OCI-LY7 (cell line): ENCODE measurements at regions of chr19 and their contacts with region 1.

Region 1: DNA sequence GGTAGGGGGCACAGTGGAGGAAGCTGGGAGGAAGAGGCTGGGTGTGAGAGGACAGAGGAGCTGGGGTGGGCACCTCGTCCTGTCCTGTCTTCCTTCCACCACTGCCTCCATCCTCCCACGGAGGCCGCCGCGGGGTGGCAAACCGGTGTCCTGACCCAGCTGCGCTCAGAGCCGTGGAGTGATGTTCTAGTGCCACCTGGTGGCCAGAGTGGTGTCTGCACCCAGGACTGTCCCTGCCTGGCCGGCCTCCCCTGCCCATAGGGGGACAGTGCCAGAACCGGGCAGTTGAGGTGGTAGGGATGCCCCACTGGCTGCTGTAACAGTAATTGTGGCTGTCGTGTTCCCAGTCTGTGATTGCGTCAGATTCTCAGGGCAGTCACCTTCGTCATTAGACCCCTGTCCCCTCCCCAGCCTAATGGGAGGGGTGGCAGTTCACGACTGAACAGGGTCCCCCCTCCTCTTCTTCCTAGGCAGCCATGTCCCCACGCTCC is 11.1 kb upstream of the ARRDC2 start:
- DNase-seq: peak; percentile 84
- H3K4me3 ChIP-seq: peak overlapping the region; percentile 68
- H3K27ac ChIP-seq: peak overlapping the region; percentile 72
- H3K4me1 ChIP-seq: peaks cover 31% of the 10 kb centered on the region
- CTCF ChIP-seq: peak; percentile 95

Region 2: GRCh38 chr19:17873786-17874757 is 122.8 kb before region 1 on chr19:
- CTCF ChIA-PET with region 1: interaction called, 4 read pairs
- POLR2A ChIA-PET with region 1: no interaction called
- intact Hi-C with region 1: loop called (anchors 5 kb)
- DNase-seq: peak; percentile 78
- H3K4me3 ChIP-seq: peak overlapping the region; percentile 65
- H3K27ac ChIP-seq: no peak overlapping the region
- H3K4me1 ChIP-seq: peaks cover 14% of the 10 kb centered on the region
- CTCF ChIP-seq: no peak

Region 3: GRCh38 chr19:17915951-17916593 is 80.8 kb before region 1 on chr19:
- CTCF ChIA-PET with region 1: no interaction called
- POLR2A ChIA-PET with region 1: no interaction called
- intact Hi-C with region 1: no loop called
- DNase-seq: no peak
- H3K4me3 ChIP-seq: no peak overlapping the region
- H3K27ac ChIP-seq: no peak overlapping the region
- H3K4me1 ChIP-seq: no peaks in the 10 kb centered on the region
- CTCF ChIP-seq: no peak

Region 4: GRCh38 chr19:17938092-17938845 is 58.6 kb before region 1 on chr19:
- CTCF ChIA-PET with region 1: interaction called, 32 read pairs
- POLR2A ChIA-PET with region 1: interaction called, 6 read pairs
- intact Hi-C with region 1: loop called (anchors 1 kb)
- DNase-seq: peak; percentile 78
- H3K4me3 ChIP-seq: no peak overlapping the region
- H3K27ac ChIP-seq: no peak overlapping the region
- H3K4me1 ChIP-seq: peaks cover 11% of the 10 kb centered on the region
- CTCF ChIP-seq: peak; percentile 92

Region 5: GRCh38 chr19:17947815-17948513 is 48.9 kb before region 1 on chr19:
- CTCF ChIA-PET with region 1: interaction called, 3 read pairs
- POLR2A ChIA-PET with region 1: no interaction called
- intact Hi-C with region 1: loop called (anchors 1 kb)
- DNase-seq: peak; percentile 98
- H3K4me3 ChIP-seq: peak overlapping the region; percentile 65
- H3K27ac ChIP-seq: peak overlapping the region; percentile 25
- H3K4me1 ChIP-seq: peaks cover 42% of the 10 kb centered on the region
- CTCF ChIP-seq: no peak

Region 6: DNA sequence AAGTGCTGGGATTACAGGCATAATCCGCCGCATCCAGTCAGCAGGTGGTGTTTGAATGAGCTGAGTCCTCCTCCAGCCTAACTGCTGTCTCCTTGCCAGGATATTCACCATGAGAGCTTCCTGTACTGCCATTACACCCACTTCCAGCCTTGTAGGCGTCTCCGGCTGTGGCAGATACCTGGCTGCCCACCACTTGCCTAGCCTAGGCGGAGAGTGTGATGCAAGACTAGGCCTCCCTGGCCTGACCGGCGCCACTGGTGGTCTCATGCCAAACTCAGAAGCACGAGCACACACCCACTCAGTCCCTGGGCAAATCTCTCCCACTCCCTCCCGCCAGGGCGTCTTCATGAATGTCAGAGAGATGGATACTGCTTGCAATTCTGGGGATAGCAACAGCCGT is 73.3 kb after region 1 on chr19:
- CTCF ChIA-PET with region 1: no interaction called
- POLR2A ChIA-PET with region 1: no interaction called
- intact Hi-C with region 1: no loop called
- DNase-seq: no peak
- H3K4me3 ChIP-seq: no peak overlapping the region
- H3K27ac ChIP-seq: no peak overlapping the region
- H3K4me1 ChIP-seq: no peaks in the 10 kb centered on the region
- CTCF ChIP-seq: no peak

Region 7: GRCh38 chr19:18131841-18132596 is 135.1 kb after region 1 on chr19:
- CTCF ChIA-PET with region 1: no interaction called
- POLR2A ChIA-PET with region 1: no interaction called
- intact Hi-C with region 1: no loop called
- DNase-seq: no peak
- H3K4me3 ChIP-seq: no peak overlapping the region
- H3K27ac ChIP-seq: no peak overlapping the region
- H3K4me1 ChIP-seq: no peaks in the 10 kb centered on the region
- CTCF ChIP-seq: no peak

Region 8: DNA sequence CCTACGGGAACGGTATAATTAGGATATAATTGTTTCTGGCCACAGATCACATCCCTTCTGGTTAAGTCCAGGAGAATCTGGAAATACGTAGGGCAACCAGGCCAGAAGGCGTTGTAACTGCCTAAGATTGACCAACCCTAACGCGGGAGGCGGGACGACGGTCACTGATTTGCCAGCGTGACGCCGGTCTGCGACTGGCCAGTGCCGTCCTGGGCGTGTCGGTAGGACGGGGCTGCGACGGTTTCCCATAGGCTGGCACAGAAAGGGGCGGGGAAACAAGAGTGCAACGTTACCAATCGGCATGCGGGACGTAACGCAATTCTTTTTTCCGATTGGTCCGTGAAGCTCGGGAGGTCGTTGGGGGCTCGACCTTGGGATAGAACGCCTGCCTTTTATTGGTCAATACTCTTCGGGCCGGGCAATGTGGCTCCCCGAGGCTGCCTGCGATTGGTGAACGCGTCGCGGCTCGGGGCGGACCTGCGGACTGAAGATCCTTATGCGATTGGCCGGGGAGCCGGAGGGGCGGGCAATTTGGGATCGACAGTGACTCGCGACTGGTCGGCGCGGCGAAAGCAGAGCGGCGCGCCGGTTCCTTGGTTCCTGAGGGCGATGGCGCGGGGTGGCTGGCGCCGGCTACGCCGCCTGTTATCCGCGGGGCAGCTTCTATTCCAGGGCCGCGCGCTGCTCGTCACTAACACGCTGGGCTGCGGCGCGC is 196.0 kb after region 1 on chr19 and contains the start of gene MPV17L2:
- CTCF ChIA-PET with region 1: no interaction called
- POLR2A ChIA-PET with region 1: no interaction called
- intact Hi-C with region 1: no loop called
- DNase-seq: peak; percentile 100
- H3K4me3 ChIP-seq: peak within 1 kb of the TSS; percentile 97
- H3K27ac ChIP-seq: peak within 1 kb of the TSS; percentile 92
- H3K4me1 ChIP-seq: peaks cover 31% of the 10 kb centered on the region
- CTCF ChIP-seq: no peak
- total RNA-seq, gene MPV17L2: 21.9 and 23.7 TPM in 2 replicates